Naive thymus-derived CD4-positive, alpha-beta T cell (primary cell): ENCODE measurements at regions of chr4 and their contacts with region 1.

Region 1: DNA sequence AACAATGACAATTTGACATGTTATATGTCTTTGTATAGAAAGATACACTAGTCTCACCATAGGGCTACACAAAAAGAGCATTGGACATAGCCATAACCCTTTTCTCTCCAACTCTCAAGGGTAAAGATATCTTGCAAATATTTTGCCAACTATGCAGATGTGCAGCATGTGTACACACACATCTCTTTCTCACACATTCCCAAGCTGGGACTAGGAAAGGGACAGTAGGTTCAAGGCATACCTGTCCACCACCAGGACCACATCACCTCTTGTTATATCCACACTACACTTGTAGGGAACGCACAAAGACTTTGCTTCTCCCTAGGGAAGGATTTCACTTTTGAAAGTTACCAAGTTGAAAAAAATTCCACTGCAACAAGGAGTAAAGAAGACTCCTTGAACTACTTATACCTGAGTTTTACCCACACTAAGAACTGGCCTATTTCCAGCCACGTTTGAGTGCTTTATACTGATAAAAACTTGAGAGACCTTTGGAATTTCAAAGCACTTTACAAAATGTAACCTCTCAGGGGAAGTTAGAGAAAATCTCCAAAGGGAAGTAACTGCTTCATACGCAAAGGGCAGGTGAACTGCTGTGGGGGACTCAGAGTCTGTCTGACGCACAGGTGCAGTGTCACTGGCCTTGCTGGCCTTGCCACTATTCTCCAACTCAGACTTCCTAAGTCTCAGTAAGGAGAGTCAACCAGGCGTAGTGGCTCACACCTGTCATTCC is 36.9 kb downstream of the NR3C2 start:
- DNase-seq: no peak
- ATAC-seq: no peak
- H3K4me3 ChIP-seq: no peak overlapping the region
- H3K4me3 Mint-ChIP-seq: no peak overlapping the region
- H3K27ac ChIP-seq: no peak overlapping the region
- H3K27ac Mint-ChIP-seq: peak overlapping the region in 1 of 9 donors; percentile 37
- H3K4me1 ChIP-seq: no peaks in the 10 kb centered on the region
- H3K4me1 Mint-ChIP-seq: peaks cover 0 to 47% (median 24%) of the 10 kb centered on the region in 7 donors
- H3K27me3 ChIP-seq: no peaks in the 10 kb centered on the region
- H3K27me3 Mint-ChIP-seq: no peaks in the 10 kb centered on the region

Region 2: GRCh38 chr4:148261848-148262247 is 143.5 kb before region 1 on chr4:
- CTCF ChIA-PET with region 1: no interaction called
- POLR2A ChIA-PET with region 1: no interaction called
- intact Hi-C with region 1: loop called in 1 of 2 experiments (anchors 5 kb)
- DNase-seq: no peak
- ATAC-seq: no peak
- H3K4me3 ChIP-seq: no peak overlapping the region
- H3K4me3 Mint-ChIP-seq: no peak overlapping the region
- H3K27ac ChIP-seq: no peak overlapping the region
- H3K27ac Mint-ChIP-seq: peak overlapping the region in 1 of 9 donors; percentile 14
- H3K4me1 ChIP-seq: no peaks in the 10 kb centered on the region
- H3K4me1 Mint-ChIP-seq: peaks cover 0 to 63% (median 29%) of the 10 kb centered on the region in 7 donors
- H3K27me3 ChIP-seq: no peaks in the 10 kb centered on the region
- H3K27me3 Mint-ChIP-seq: no peaks in the 10 kb centered on the region

Region 3: GRCh38 chr4:148355442-148356123 is 49.7 kb before region 1 on chr4:
- CTCF ChIA-PET with region 1: no interaction called
- POLR2A ChIA-PET with region 1: no interaction called
- intact Hi-C with region 1: no loop called
- DNase-seq: no peak
- ATAC-seq: no peak
- H3K4me3 ChIP-seq: no peak overlapping the region
- H3K4me3 Mint-ChIP-seq: peak overlapping the region in 7 of 10 donors; percentile 14 to 54 (median 29)
- H3K27ac ChIP-seq: no peak overlapping the region
- H3K27ac Mint-ChIP-seq: peak overlapping the region in 5 of 9 donors; percentile 45 to 87 (median 56)
- H3K4me1 ChIP-seq: peaks cover 8 to 16% of the 10 kb centered on the region in 2 donors
- H3K4me1 Mint-ChIP-seq: peaks cover 9 to 73% (median 51%) of the 10 kb centered on the region in 7 donors
- H3K27me3 ChIP-seq: no peaks in the 10 kb centered on the region
- H3K27me3 Mint-ChIP-seq: no peaks in the 10 kb centered on the region